A549 (cell line): ENCODE measurements at regions of chr2 and their contacts with region 1.

Region 1: GRCh38 chr2:26942543-26943295 is 27.7 kb upstream of the MAPRE3 start:
- DNase-seq: peak; percentile 78 to 87
- ATAC-seq: peak; percentile 64 to 82; a peak in 5 of 6 replicates
- H3K4me3 ChIP-seq: no peak overlapping the region
- H3K27ac ChIP-seq: no peak overlapping the region
- H3K4me1 ChIP-seq: peaks cover 8% of the 10 kb centered on the region; the same call in 1 of the 3 replicates
- CTCF ChIP-seq: peak; percentile 96
- EP300 ChIP-seq: no peak
- POLR2A ChIP-seq: no peak
- RAD21 ChIP-seq: peak; percentile 79 to 88

Region 2: DNA sequence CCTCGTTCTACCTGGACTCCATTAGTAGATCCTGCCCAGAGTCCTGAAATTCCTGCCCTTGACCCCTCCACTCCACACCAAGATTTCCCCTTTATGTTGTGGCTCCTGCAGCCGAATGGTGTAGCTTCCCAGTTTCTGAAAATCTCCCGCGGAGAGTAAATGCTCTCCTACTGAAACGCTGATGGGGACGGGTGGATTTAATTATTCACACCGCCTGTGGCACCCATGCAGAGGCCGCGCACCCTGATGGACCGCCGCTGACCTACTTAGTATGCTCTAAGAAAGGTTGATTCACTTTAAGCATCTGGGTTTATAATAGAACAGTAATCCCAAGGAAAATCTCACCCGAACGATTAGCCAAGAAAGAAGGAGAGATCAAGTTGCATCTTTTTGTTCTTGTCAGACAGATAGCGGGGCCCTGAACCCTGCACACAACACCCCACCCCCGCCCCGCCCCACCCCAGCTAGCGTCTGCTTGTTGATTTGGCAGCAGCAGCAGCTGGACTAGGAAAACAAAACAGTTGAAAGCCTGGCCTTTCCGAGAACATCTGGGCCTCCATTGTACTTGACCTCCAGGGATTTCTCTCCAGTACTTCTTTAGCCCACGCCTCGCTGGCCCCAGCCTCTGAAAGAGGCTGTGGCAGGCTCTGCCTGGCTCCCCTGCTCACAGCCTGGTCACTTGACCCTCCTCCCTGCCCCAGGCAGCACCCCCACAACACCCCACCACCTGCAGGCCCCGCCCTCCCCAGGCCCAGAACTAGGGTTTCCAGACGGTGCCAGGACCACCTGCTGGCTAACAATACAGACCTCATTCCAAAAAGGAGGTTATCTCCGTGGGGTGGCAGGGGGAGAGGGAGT is 41.2 kb before region 1 on chr2:
- CTCF ChIA-PET with region 1: interaction called, 24 read pairs
- POLR2A ChIA-PET with region 1: no interaction called
- DNase-seq: no peak
- ATAC-seq: no peak
- H3K4me3 ChIP-seq: no peak overlapping the region
- H3K27ac ChIP-seq: no peak overlapping the region
- H3K4me1 ChIP-seq: no peaks in the 10 kb centered on the region
- CTCF ChIP-seq: no peak
- EP300 ChIP-seq: no peak
- POLR2A ChIP-seq: no peak
- RAD21 ChIP-seq: no peak

Region 3: DNA sequence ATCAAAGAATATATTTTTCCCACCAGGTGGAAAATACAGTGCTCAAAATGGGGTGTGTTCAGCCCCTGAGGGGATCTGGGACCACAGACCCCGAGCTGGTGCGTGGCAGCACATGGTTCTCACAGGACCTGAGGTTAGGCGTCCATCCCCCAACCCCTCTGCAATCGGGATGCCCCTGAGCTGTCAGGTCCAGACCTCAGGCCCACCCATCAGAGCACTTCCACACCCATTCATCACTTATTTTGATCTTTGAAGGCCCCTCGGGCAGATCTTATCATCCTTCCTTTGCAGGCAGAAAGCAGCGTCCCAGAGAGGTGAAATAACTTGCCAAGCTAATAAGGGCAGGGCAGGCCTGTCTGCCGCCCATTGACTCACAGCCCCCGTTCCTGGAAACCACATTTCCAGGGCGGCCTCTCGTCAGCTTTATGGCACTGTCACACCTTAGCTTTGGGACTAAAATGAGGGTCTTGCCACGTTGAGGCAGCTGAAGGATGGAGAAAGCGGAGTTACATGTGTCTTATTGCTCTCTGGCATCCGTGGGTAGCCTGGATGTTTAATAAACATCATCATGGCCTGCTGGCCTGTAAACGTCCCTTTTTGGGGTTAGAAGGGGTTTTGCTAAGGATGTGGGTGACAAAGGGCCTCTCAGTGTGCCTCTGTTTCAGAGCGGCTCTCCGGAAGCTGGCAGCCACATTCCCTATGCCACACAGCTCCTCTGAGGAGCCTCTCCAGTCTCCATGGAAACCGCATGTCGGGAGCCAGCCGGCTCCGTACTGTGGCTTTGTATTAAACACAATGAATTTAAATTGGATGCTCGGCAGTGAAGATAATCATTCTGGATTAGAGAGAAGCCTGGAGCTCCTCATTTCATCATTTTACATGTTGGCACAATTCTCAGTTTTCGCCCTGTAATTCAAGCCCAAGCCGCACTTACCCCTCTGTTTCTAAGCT is 30.5 kb before region 1 on chr2:
- CTCF ChIA-PET with region 1: interaction called, 24 read pairs
- POLR2A ChIA-PET with region 1: no interaction called
- DNase-seq: no peak
- ATAC-seq: no peak
- H3K4me3 ChIP-seq: no peak overlapping the region
- H3K27ac ChIP-seq: no peak overlapping the region
- H3K4me1 ChIP-seq: no peaks in the 10 kb centered on the region
- CTCF ChIP-seq: no peak
- EP300 ChIP-seq: no peak
- POLR2A ChIP-seq: no peak
- RAD21 ChIP-seq: no peak